ENCODE measurements at regions of chr10 and their contacts with region 1.

Region 1: DNA sequence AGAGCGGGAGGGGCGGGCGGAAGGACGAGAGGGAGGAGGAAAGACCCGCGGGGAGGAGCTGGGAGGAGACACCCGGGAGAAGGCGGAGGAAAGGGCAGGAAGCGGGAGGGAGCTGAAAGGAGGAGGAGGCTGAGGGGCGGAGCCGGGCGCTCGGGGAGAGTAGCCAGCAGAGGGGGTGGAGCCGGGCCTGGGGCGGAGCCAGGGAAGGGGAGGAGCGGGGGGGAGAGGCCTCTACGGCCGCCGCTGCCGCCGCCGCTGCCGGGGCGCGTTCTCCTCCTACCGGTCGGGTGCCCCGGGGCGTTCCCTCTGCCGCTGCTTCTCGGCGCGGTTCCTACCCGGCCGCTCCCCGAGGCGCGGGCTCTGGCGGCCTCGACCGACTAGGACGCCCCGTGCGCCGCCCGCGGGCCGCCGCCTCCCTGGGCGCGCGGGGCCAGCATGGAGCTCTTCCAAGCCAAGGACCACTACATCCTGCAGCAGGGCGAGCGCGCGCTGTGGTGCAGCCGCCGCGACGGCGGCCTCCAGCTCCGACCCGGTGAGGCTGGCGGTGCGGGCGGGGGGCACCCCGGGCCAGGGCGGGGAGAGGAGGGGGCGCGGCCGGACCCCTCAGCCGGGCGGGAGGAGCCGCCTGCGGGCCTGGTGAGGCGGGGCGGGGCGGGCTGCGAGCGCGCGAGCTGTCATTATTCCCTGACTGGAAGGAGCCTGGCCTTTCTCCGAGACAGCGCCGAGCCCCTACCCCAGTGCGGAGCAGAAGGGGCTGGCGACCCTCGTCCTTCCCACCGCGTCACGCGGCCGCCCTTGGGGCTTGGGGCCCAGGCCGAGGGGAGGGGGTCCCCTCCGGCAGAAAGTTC is at the start of gene INPP5F:
- DNase-seq: peak; percentile 96 to 98
- ATAC-seq: peak; percentile 90 to 96
- H3K4me3 ChIP-seq: peak within 1 kb of the TSS; percentile 82
- H3K27ac ChIP-seq: peak within 1 kb of the TSS; percentile 77 to 96
- H3K4me1 ChIP-seq: peaks cover 13% of the 10 kb centered on the region; the same call in 2 of the 3 replicates
- CTCF ChIP-seq: peak; percentile 24; the same call in 1 of the 3 replicates
- EP300 ChIP-seq: no peak
- POLR2A ChIP-seq: no peak
- RAD21 ChIP-seq: no peak; a peak in 1 of 5 replicates
- polyA plus RNA-seq, gene INPP5F: 7.7 and 8.3 TPM in 2 replicates

Region 2: GRCh38 chr10:119634219-119634544 is 91.9 kb before region 1 on chr10:
- CTCF ChIA-PET with region 1: no interaction called
- POLR2A ChIA-PET with region 1: no interaction called
- DNase-seq: peak in 1 of 2 experiments; percentile 27
- ATAC-seq: peak in 1 of 2 experiments; percentile 57; a peak in 2 of 6 replicates
- H3K4me3 ChIP-seq: no peak overlapping the region
- H3K27ac ChIP-seq: peak overlapping the region; percentile 2 to 9; a peak in 1 of 6 replicates
- H3K4me1 ChIP-seq: peaks cover 7% of the 10 kb centered on the region; the same call in 2 of the 3 replicates
- CTCF ChIP-seq: no peak
- EP300 ChIP-seq: no peak
- POLR2A ChIP-seq: no peak
- RAD21 ChIP-seq: no peak

Region 3: DNA sequence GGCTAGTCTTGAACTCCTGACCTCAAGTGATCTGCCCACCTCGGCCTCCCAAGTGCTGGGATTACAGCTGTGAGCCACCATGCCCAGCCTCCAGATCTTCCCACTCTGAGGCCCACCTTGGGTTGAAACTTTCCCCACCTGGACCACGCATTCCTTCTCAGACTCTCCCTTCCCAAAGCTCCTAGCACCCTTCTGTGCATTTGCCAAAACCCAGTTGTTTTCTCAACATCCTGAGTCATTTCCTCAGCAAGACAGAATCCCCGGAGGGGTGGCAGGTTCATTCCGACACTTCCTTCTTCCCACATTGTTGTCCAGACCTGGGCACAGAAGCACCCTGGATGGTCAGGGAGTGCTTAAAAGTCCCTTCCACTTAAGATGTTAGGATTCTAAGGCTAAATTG is 46.0 kb before region 1 on chr10:
- CTCF ChIA-PET with region 1: interaction called, 13 read pairs
- POLR2A ChIA-PET with region 1: interaction called, 17 read pairs
- DNase-seq: peak; percentile 70 to 84
- ATAC-seq: peak; percentile 45 to 66
- H3K4me3 ChIP-seq: 0 out of 3 replicates have a peak overlapping the region, but pooled peaks have one; percentile 14
- H3K27ac ChIP-seq: peak overlapping the region; percentile 88 to 93
- H3K4me1 ChIP-seq: peaks cover 70% of the 10 kb centered on the region
- CTCF ChIP-seq: no peak
- EP300 ChIP-seq: no peak; a peak in 1 of 5 replicates
- POLR2A ChIP-seq: no peak
- RAD21 ChIP-seq: no peak

Region 4: GRCh38 chr10:119686439-119687191 is 39.4 kb before region 1 on chr10:
- CTCF ChIA-PET with region 1: interaction called, 18 read pairs
- POLR2A ChIA-PET with region 1: interaction called, 17 read pairs
- DNase-seq: peak; percentile 81
- ATAC-seq: peak; percentile 82 to 90
- H3K4me3 ChIP-seq: no peak overlapping the region
- H3K27ac ChIP-seq: peak overlapping the region in 1 of 2 experiments; percentile 42; a peak in 1 of 6 replicates
- H3K4me1 ChIP-seq: peaks cover 13% of the 10 kb centered on the region
- CTCF ChIP-seq: peak; percentile 92
- EP300 ChIP-seq: no peak
- POLR2A ChIP-seq: no peak
- RAD21 ChIP-seq: peak; percentile 90 to 93

Region 5: DNA sequence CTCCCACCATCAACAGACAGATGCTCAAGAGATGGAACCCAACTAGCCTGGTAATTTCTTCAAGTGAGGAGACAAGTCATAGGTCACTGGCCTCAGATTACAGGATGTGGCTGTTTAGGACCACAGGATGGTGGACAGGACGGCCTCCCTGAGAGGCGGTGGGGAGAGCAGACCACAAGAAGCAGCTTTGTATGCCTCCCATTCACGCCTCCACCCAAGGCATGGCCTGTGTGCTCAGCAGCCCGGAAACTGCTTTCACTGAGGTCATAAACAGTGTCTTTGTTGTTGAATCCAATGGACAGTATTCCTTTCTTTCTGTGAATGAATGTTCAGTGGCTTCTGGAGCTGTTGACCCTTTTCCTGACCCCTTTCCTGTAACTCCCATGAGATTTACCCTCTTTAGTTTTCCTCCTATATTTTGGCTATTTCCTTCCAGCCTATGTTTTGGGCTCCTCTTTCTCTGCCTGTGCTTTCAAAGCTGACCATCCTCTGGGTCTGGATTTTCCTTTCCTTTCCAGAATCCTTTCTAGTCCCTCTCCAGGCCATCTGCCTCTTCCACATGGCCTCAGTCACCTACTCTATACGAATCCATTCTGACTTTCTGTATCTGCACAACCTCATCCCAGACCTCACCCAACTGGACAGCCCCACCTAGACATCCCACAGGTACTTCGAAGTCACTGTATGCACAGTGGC is 32.6 kb before region 1 on chr10:
- CTCF ChIA-PET with region 1: interaction called, 11 read pairs
- POLR2A ChIA-PET with region 1: no interaction called
- DNase-seq: no peak
- ATAC-seq: no peak
- H3K4me3 ChIP-seq: no peak overlapping the region
- H3K27ac ChIP-seq: no peak overlapping the region
- H3K4me1 ChIP-seq: no peaks in the 10 kb centered on the region
- CTCF ChIP-seq: no peak
- EP300 ChIP-seq: no peak
- POLR2A ChIP-seq: no peak
- RAD21 ChIP-seq: no peak

Region 6: DNA sequence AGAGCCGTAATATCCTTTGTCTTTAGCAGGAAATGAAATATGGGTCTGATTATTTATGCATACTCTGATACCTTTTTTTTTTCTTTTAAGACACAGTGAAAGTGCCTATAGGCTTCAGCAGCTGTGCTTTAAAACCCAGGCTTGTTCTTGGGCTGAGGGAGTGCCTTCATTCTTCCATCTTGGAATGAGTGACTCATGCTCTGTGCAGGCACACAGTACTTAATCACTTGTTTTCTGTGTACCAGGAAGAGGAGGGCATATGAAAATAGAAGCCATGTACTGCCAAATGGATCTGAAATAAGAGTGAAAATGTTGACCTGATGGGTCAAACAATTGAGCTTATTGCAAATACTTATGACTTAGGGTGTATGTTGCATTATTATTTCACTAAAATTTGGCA is 11.8 kb after region 1 on chr10:
- CTCF ChIA-PET with region 1: interaction called, 8 read pairs
- POLR2A ChIA-PET with region 1: interaction called, 11 read pairs
- DNase-seq: peak; percentile 81 to 94
- ATAC-seq: peak; percentile 99 to 100
- H3K4me3 ChIP-seq: no peak overlapping the region
- H3K27ac ChIP-seq: peak overlapping the region; percentile 46 to 64
- H3K4me1 ChIP-seq: peaks cover 32% of the 10 kb centered on the region
- CTCF ChIP-seq: no peak
- EP300 ChIP-seq: no peak
- POLR2A ChIP-seq: no peak
- RAD21 ChIP-seq: no peak

Region 7: GRCh38 chr10:119776536-119776935 is 50.5 kb after region 1 on chr10:
- CTCF ChIA-PET with region 1: no interaction called
- POLR2A ChIA-PET with region 1: no interaction called
- DNase-seq: no peak
- ATAC-seq: no peak
- H3K4me3 ChIP-seq: no peak overlapping the region
- H3K27ac ChIP-seq: no peak overlapping the region
- H3K4me1 ChIP-seq: no peaks in the 10 kb centered on the region
- CTCF ChIP-seq: no peak
- EP300 ChIP-seq: no peak
- POLR2A ChIP-seq: no peak
- RAD21 ChIP-seq: no peak

Region 8: GRCh38 chr10:119892188-119893065 is 166.4 kb after region 1 on chr10 and contains the start of gene SEC23IP:
- CTCF ChIA-PET with region 1: no interaction called
- POLR2A ChIA-PET with region 1: interaction called, 13 read pairs
- DNase-seq: peak; percentile 93 to 98
- ATAC-seq: peak; percentile 97 to 99
- H3K4me3 ChIP-seq: peak within 1 kb of the TSS; percentile 98
- H3K27ac ChIP-seq: peak within 1 kb of the TSS; percentile 90 to 97
- H3K4me1 ChIP-seq: peaks cover 40% of the 10 kb centered on the region
- CTCF ChIP-seq: no peak
- EP300 ChIP-seq: no peak
- POLR2A ChIP-seq: peak; percentile 91
- RAD21 ChIP-seq: no peak
- polyA plus RNA-seq, gene SEC23IP: 62.5 and 75.6 TPM in 2 replicates

Measured in A549 (cell line).